GM18951 (cell line): ENCODE measurements at regions of chr7 and their contacts with region 1.

Region 1: DNA sequence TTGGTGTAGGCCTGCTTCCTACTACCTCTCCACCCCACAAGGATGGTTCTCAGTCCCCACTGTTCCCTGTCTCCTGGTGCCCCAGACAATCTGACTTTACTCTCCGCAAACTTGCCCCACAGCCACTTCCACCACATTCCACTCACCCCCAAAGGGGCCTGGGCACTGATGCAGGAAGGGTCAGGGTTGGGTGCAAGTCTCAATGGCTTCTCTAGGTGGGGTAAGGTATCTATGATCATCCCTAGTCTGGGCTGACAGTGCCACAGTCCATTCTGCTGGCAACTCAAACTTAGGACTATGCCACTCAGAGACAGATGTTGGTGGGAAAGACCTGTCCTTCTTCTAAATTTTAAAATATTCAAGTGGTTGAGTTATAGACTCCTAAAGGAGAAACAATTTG is 239.7 kb downstream of the MTERF1 start:
- POLR2A ChIP-seq: no peak

Region 2: DNA sequence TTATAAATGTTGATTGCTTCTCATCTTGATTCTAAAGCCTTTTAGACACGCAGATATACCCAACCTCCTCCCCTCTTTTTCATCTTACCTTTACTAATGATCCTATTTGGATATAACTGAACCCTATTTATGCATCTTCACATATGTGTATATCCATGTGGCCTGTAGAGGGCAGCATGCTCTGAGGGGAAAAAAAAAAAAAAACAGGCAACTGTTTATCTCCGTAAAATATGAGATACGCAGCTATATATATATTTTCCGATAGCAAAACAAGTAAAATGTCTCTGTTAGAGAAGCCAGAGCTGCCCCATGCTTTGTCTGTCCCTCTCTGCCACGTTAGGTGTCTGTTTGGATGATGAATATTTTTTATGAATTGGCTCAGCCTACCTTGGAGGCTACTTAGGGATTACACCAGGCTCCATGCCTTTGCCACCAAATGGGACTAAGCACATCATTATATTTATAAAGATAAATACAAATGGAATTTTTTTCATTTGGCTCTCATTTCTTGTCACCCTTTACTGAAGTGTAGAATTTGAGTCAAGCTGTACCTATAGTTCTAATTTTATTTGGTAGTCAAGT is 551.3 kb before region 1 on chr7:
- in situ Hi-C with region 1: loop called (anchors 10 kb)
- POLR2A ChIP-seq: no peak